Activated CD8-positive, alpha-beta T cell treated with anti-CD3 and anti-CD28 coated beads for 36 hours (primary cell): ENCODE measurements at regions of chr11 and their contacts with region 1.

Region 1: DNA sequence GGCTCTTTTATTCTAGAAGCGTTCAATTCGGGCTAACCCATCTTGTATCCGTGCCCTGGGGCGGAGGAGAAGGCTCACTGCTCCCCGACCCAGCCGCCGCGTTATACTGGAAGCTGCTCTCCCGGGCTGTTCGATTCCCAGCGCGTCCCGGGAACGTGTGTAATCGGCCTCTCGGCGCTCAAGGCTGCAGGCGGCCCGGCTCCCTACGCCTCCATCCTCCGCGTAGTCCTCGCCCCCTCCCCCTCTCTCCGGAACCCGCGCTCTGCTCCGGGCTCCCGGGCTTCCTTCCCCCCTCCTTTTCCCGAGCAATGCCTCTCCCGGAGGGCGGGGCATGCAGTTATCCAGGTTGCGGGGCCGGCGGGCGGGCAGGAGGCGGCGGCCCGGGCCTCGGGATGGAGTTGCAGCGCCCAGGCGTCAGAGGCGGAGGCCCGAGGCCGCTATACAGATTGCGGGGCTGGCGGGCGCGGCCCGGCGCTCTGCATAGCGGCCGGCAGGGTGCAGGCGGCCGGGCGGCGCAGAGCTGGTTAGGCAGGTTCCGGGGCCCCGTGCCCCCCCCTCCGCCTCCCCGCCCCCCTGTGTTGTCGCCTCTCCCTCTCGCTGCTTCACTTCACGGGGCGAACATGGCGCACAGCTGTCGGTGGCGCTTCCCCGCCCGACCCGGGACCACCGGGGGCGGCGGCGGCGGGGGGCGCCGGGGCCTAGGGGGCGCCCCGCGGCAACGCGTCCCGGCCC is at the start of gene KMT2A:
- DNase-seq: peak; percentile 92
- ATAC-seq: peak; percentile 60
- H3K4me3 Mint-ChIP-seq: peak within 1 kb of the TSS; percentile 87
- H3K27ac Mint-ChIP-seq: peak within 1 kb of the TSS; percentile 97
- H3K4me1 Mint-ChIP-seq: peaks cover 30% of the 10 kb centered on the region
- H3K27me3 Mint-ChIP-seq: no peaks in the 10 kb centered on the region
- CTCF ChIP-seq: no peak
- total RNA-seq, gene KMT2A: 68.8 to 75.0 TPM

Region 2: DNA sequence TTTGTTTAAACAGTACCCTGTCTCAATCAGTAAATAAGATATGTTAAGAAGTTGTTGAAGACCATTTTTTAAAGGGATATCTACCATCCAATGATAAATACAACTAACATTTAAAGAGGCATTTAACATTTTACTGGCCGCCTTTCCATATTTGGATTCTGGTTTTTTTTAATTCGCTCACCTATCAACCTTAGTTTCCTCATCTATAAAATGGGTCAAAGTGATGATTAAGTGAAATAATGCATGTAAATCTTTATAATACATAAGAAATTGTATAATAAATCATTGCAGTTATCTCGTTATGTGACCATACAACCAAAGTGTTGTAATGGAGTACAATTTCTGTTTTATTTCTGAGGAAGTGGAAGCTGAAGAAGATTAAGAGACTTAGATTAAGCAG is 52.4 kb before region 1 on chr11:
- CTCF ChIA-PET with region 1: no interaction called
- POLR2A ChIA-PET with region 1: no interaction called
- intact Hi-C with region 1: no loop called
- DNase-seq: no peak
- ATAC-seq: no peak
- H3K4me3 Mint-ChIP-seq: no peak overlapping the region
- H3K27ac Mint-ChIP-seq: no peak overlapping the region
- H3K4me1 Mint-ChIP-seq: no peaks in the 10 kb centered on the region
- H3K27me3 Mint-ChIP-seq: no peaks in the 10 kb centered on the region
- CTCF ChIP-seq: no peak

Region 3: GRCh38 chr11:118401151-118401878 is 34.7 kb before region 1 on chr11 and contains the start of gene ATP5MG:
- CTCF ChIA-PET with region 1: interaction called, 14 read pairs
- POLR2A ChIA-PET with region 1: interaction called, 32 read pairs
- intact Hi-C with region 1: loop called (anchors 5 kb)
- DNase-seq: peak; percentile 96
- ATAC-seq: peak; percentile 70
- H3K4me3 Mint-ChIP-seq: peak within 1 kb of the TSS; percentile 86
- H3K27ac Mint-ChIP-seq: peak within 1 kb of the TSS; percentile 99
- H3K4me1 Mint-ChIP-seq: peaks cover 54% of the 10 kb centered on the region
- H3K27me3 Mint-ChIP-seq: no peaks in the 10 kb centered on the region
- CTCF ChIP-seq: no peak
- total RNA-seq, gene ATP5MG: 237 to 249 TPM

Region 4: GRCh38 chr11:118448294-118448693 is 12.2 kb after region 1 on chr11:
- CTCF ChIA-PET with region 1: interaction called, 5 read pairs
- POLR2A ChIA-PET with region 1: interaction called, 13 read pairs
- intact Hi-C with region 1: no loop called
- DNase-seq: peak; percentile 40
- ATAC-seq: peak; percentile 78
- H3K4me3 Mint-ChIP-seq: no peak overlapping the region
- H3K27ac Mint-ChIP-seq: peak overlapping the region; percentile 59
- H3K4me1 Mint-ChIP-seq: peaks cover 72% of the 10 kb centered on the region
- H3K27me3 Mint-ChIP-seq: no peaks in the 10 kb centered on the region
- CTCF ChIP-seq: no peak

Region 5: GRCh38 chr11:118462178-118462577 is 26.1 kb after region 1 on chr11:
- CTCF ChIA-PET with region 1: interaction called, 6 read pairs
- POLR2A ChIA-PET with region 1: interaction called, 12 read pairs
- intact Hi-C with region 1: no loop called
- DNase-seq: no peak
- ATAC-seq: no peak
- H3K4me3 Mint-ChIP-seq: no peak overlapping the region
- H3K27ac Mint-ChIP-seq: no peak overlapping the region
- H3K4me1 Mint-ChIP-seq: peaks cover 31% of the 10 kb centered on the region
- H3K27me3 Mint-ChIP-seq: no peaks in the 10 kb centered on the region
- CTCF ChIP-seq: no peak

Region 6: DNA sequence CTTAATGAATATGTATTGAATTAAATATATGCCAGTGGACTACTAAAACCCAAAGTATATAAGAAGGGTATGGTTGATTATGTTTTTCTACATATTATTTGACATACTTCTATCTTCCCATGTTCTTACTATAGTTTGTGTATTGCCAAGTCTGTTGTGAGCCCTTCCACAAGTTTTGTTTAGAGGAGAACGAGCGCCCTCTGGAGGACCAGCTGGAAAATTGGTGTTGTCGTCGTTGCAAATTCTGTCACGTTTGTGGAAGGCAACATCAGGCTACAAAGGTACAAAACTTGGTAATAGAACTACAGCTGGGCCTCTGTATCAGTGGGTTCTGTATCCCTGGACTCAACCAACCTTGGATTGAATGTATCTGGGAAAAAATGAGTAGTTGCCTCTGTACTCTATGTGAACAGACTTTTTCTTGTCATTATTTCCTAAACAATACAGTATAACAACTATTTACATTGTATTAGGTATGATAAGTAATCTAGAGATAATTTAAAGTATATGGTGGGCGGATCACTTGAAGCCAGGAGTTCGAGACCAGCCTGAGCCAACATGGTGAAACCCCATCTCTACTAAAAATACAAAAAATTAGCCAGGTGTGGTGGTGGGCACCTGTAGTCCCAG is 52.5 kb after region 1 on chr11:
- CTCF ChIA-PET with region 1: interaction called, 22 read pairs
- POLR2A ChIA-PET with region 1: interaction called, 3 read pairs
- intact Hi-C with region 1: loop called (anchors 5 kb)
- DNase-seq: peak; percentile 76
- ATAC-seq: peak; percentile 75
- H3K4me3 Mint-ChIP-seq: no peak overlapping the region
- H3K27ac Mint-ChIP-seq: peak overlapping the region; percentile 10
- H3K4me1 Mint-ChIP-seq: peaks cover 7% of the 10 kb centered on the region
- H3K27me3 Mint-ChIP-seq: no peaks in the 10 kb centered on the region
- CTCF ChIP-seq: peak; percentile 88